Mammary epithelial cell (primary cell): ENCODE measurements at regions of chr14 and their contacts with region 1.

Region 1: GRCh38 chr14:95361373-95362137 is 41.8 kb upstream of the CLMN start:
- DNase-seq: peak; percentile 51
- H3K4me3 ChIP-seq: peak overlapping the region in 2 of 3 experiments; percentile 10 to 13
- H3K27ac ChIP-seq: no peak overlapping the region
- H3K4me1 ChIP-seq: peaks cover 16% of the 10 kb centered on the region
- H3K27me3 ChIP-seq: no peaks in the 10 kb centered on the region
- CTCF ChIP-seq: peak; percentile 74 to 81

Region 2: GRCh38 chr14:95106971-95107370 is 254.6 kb before region 1 on chr14:
- CTCF ChIA-PET with region 1: no interaction called
- dilution Hi-C with region 1: no loop called
- in situ Hi-C with region 1: no loop called
- intact Hi-C with region 1: loop called (anchors 10 kb)
- DNase-seq: peak; percentile 36
- H3K4me3 ChIP-seq: no peak overlapping the region
- H3K27ac ChIP-seq: no peak overlapping the region
- H3K4me1 ChIP-seq: no peaks in the 10 kb centered on the region
- H3K27me3 ChIP-seq: no peaks in the 10 kb centered on the region
- CTCF ChIP-seq: no peak

Region 3: DNA sequence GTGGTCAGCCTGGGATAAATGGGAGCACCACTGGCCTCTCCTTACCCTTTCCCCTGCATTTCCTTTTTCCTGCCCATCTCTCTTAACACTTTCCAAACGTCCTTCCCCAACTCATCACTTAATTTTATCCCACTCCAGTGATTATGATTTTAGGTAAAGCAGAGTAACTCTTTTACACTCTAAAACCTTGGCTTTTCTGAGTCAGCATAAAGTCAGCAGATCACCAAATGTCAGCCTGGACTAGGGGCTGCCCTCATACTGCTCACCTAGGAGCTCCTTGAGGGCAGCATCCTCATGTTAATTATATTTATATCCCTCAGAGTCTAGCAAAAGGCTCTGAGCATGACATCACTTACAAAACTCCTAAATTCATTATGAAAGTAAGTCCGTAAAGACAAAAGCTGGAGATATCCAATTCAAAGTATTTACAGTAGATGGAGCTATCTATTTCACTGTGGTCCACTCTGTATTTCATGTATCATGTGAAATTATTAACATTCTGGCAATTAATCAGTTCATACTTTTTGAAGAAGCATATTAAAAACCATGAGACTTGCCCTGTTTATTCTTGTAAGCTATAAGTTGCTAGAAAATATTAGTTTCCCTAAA is 187.3 kb before region 1 on chr14:
- CTCF ChIA-PET with region 1: interaction called, 3 read pairs
- dilution Hi-C with region 1: no loop called
- in situ Hi-C with region 1: no loop called
- intact Hi-C with region 1: loop called (anchors 5 kb)
- DNase-seq: no peak
- H3K4me3 ChIP-seq: no peak overlapping the region
- H3K27ac ChIP-seq: no peak overlapping the region
- H3K4me1 ChIP-seq: no peaks in the 10 kb centered on the region
- H3K27me3 ChIP-seq: no peaks in the 10 kb centered on the region
- CTCF ChIP-seq: peak; percentile 19 to 39

Region 4: DNA sequence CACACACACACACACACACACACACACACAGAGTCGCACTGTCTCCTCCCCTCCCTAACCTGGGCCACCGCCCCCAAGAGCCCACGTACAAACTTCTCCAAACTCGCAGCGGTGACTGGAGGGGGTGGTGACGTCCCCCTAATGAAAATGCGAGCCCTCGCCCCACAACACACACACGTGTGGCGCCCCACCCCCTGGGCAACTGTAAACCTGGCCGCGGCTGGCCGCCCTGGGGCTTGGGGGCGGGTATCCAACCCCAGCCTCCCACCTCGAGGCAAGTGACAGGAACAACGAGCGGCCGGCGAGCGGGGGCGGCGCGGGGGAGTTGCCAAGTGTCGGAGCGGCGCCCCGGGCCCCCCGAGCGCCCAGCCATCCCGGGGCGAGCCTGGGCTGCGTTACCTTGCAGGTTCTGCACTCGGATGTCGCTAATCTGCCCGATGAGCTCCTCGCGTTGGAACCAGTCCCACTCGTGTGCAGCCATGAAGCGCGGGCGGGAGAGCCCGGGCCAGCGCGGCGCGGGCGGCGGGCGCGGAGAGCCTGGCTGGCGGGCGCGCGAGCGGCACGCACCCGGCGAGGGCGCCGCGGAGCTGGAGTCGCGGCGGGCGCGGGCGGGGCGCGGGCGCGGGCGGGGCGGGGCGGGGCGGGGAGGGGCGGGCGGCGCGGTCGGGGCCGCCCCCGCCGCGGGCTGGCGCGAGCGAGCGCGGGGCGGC is 42.1 kb before region 1 on chr14 and contains the start of gene CLMN:
- CTCF ChIA-PET with region 1: no interaction called
- dilution Hi-C with region 1: no loop called
- in situ Hi-C with region 1: no loop called
- intact Hi-C with region 1: loop called (anchors 5 kb)
- DNase-seq: peak; percentile 52
- H3K4me3 ChIP-seq: peak within 1 kb of the TSS; percentile 78 to 85 (median 82)
- H3K27ac ChIP-seq: peak within 1 kb of the TSS; percentile 58
- H3K4me1 ChIP-seq: peaks cover 65% of the 10 kb centered on the region
- H3K27me3 ChIP-seq: no peaks in the 10 kb centered on the region
- CTCF ChIP-seq: no peak
- total RNA-seq, gene CLMN: 12.2 to 64.3 TPM

Region 5: GRCh38 chr14:95585953-95586620 is 224.5 kb after region 1 on chr14:
- CTCF ChIA-PET with region 1: no interaction called
- dilution Hi-C with region 1: no loop called
- in situ Hi-C with region 1: no loop called
- intact Hi-C with region 1: no loop called
- DNase-seq: no peak
- H3K4me3 ChIP-seq: no peak overlapping the region
- H3K27ac ChIP-seq: no peak overlapping the region
- H3K4me1 ChIP-seq: no peaks in the 10 kb centered on the region
- H3K27me3 ChIP-seq: peaks cover 3% of the 10 kb centered on the region
- CTCF ChIP-seq: no peak